Activated CD4-positive, alpha-beta memory T cell treated with anti-CD3 and anti-CD28 coated beads for 36 hours (primary cell): ENCODE measurements at regions of chr7 and their contacts with region 1.

Region 1: GRCh38 chr7:50397320-50397970 is 52.7 kb downstream of the FIGNL1 start:
- DNase-seq: peak; percentile 50
- H3K4me3 Mint-ChIP-seq: peak overlapping the region; percentile 20
- H3K27ac Mint-ChIP-seq: peak overlapping the region; percentile 84
- H3K4me1 Mint-ChIP-seq: peaks cover 79% of the 10 kb centered on the region
- H3K27me3 Mint-ChIP-seq: no peaks in the 10 kb centered on the region

Region 2: DNA sequence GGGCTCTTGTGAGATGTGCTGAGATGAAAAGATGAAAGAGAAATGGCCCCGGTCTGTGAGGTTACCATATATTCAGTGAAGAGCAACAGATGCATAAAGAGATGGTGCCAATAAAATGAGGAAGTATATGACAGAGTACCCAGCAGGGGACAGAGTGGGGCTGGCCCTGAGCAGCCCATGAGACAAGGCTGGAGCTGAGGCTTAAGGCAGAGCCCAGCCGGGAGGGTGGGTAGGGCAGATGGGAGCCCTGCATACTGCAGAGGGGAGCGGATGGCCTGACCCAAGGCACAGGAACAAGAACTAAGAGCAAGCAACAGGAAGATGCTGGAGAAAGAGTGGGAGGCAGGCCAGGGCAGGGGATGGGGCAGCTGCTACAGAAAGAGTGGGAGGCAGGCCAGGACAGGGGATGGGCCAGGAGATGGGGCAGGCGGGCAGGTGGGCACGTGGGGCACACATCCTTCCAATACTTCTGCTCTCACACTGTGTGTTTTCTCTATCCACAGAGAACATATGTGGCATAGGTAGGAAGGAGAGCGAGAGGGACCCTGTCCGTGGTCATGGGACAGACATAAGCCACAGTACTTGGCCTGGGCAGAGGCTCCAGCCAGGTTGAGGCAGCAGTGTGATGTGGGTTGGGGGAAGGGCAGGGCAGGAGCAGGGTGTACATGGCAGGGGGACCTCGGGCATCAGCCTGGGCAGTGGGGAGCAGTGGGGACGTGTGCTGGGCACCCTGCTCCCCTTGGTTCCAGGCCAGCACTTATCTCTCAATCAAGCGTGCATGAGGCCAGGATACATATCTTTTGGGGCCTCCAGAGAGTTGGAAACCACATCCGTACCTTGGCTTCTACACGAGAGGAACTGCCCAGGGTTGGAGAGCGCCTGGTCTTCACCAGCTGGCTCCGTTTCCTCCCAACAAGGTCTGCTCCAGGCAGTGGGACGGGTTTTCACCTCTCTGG is 184.5 kb before region 1 on chr7:
- CTCF ChIA-PET with region 1: no interaction called
- POLR2A ChIA-PET with region 1: interaction called, 3 read pairs
- intact Hi-C with region 1: loop called (anchors 1 kb)
- DNase-seq: peak; percentile 47
- H3K4me3 Mint-ChIP-seq: peak overlapping the region; percentile 28
- H3K27ac Mint-ChIP-seq: peak overlapping the region; percentile 71
- H3K4me1 Mint-ChIP-seq: peaks cover 84% of the 10 kb centered on the region
- H3K27me3 Mint-ChIP-seq: no peaks in the 10 kb centered on the region

Region 3: DNA sequence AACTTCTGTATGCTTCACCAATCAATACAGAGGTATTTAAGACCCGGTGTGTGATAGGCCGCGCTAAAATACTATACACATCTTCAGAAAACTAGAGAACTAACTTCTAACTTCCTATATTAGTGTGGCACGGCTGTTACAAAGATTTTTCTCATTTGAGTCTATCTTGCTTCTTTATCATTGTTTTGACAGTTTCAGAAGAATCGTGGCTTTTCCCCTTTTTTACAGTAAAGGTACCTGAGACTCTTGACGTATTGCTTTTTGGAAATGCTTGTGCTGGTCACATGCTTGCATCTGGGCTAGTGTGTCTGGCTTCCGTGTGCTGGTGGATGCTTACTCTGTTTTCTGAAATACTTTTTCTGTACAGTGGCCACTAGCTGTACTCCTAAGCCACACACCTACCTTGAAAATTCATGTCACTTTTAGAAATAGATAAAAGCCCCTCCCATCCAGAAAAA is 80.2 kb before region 1 on chr7:
- CTCF ChIA-PET with region 1: no interaction called
- POLR2A ChIA-PET with region 1: interaction called, 4 read pairs
- intact Hi-C with region 1: loop called (anchors 2 kb)
- DNase-seq: peak; percentile 75
- H3K4me3 Mint-ChIP-seq: peak overlapping the region; percentile 86
- H3K27ac Mint-ChIP-seq: peak overlapping the region; percentile 94
- H3K4me1 Mint-ChIP-seq: peaks cover 92% of the 10 kb centered on the region
- H3K27me3 Mint-ChIP-seq: no peaks in the 10 kb centered on the region

Region 4: GRCh38 chr7:50335795-50336754 is 61.4 kb before region 1 on chr7:
- CTCF ChIA-PET with region 1: no interaction called
- POLR2A ChIA-PET with region 1: interaction called, 8 read pairs
- intact Hi-C with region 1: loop called (anchors 2 kb)
- DNase-seq: peak; percentile 93
- H3K4me3 Mint-ChIP-seq: no peak overlapping the region
- H3K27ac Mint-ChIP-seq: no peak overlapping the region
- H3K4me1 Mint-ChIP-seq: peaks cover 2% of the 10 kb centered on the region
- H3K27me3 Mint-ChIP-seq: no peaks in the 10 kb centered on the region

Region 5: GRCh38 chr7:50349963-50350944 is 47.2 kb before region 1 on chr7:
- CTCF ChIA-PET with region 1: interaction called, 3 read pairs
- POLR2A ChIA-PET with region 1: interaction called, 9 read pairs
- intact Hi-C with region 1: loop called (anchors 1 kb)
- DNase-seq: peak; percentile 94
- H3K4me3 Mint-ChIP-seq: peak overlapping the region; percentile 14
- H3K27ac Mint-ChIP-seq: peak overlapping the region; percentile 92
- H3K4me1 Mint-ChIP-seq: peaks cover 98% of the 10 kb centered on the region
- H3K27me3 Mint-ChIP-seq: no peaks in the 10 kb centered on the region

Region 6: GRCh38 chr7:50369143-50370026 is 28.1 kb before region 1 on chr7:
- CTCF ChIA-PET with region 1: interaction called, 11 read pairs
- POLR2A ChIA-PET with region 1: interaction called, 13 read pairs
- intact Hi-C with region 1: loop called (anchors 1 kb)
- DNase-seq: peak; percentile 56
- H3K4me3 Mint-ChIP-seq: no peak overlapping the region
- H3K27ac Mint-ChIP-seq: peak overlapping the region; percentile 93
- H3K4me1 Mint-ChIP-seq: peaks cover 97% of the 10 kb centered on the region
- H3K27me3 Mint-ChIP-seq: no peaks in the 10 kb centered on the region

Region 7: DNA sequence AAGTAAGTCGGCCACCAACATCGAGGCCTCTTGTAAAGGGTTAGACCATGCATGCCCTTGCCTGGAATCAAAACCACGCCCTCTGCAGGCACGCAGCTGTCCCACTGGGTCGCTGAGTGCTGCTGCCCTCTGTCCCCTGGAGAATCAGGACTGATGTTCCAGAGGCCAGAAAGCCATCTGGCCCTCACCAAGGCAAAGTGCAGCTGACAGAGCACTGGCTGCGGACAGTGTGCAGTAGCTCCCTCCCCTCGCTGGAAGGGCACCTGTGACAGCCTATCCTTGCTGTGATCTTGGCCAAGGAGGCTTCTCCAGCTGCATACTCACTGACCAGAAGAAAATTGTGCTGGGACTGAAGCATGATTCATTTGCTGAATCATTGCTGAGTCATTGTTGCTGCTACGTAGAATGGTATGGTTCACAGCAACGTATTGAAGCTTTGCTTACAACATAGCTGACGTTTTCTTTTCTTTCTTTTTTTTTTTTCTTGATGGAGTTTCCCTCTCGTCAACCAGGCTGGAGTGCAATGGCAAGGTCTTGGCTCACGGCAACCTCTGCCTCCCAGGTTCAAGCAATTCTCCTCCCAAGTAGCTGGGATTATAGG is 137.3 kb after region 1 on chr7:
- CTCF ChIA-PET with region 1: no interaction called
- POLR2A ChIA-PET with region 1: no interaction called
- intact Hi-C with region 1: loop called (anchors 2 kb)
- DNase-seq: peak; percentile 33
- H3K4me3 Mint-ChIP-seq: no peak overlapping the region
- H3K27ac Mint-ChIP-seq: no peak overlapping the region
- H3K4me1 Mint-ChIP-seq: peaks cover 27% of the 10 kb centered on the region
- H3K27me3 Mint-ChIP-seq: peaks cover 7% of the 10 kb centered on the region

Region 8: GRCh38 chr7:50982626-50983025 is 585.2 kb after region 1 on chr7:
- CTCF ChIA-PET with region 1: no interaction called
- POLR2A ChIA-PET with region 1: no interaction called
- intact Hi-C with region 1: no loop called
- DNase-seq: no peak
- H3K4me3 Mint-ChIP-seq: no peak overlapping the region
- H3K27ac Mint-ChIP-seq: no peak overlapping the region
- H3K4me1 Mint-ChIP-seq: no peaks in the 10 kb centered on the region
- H3K27me3 Mint-ChIP-seq: peaks cover 6% of the 10 kb centered on the region